ENCODE measurements at regions of chr12 and their contacts with region 1.

Region 1: GRCh38 chr12:15276088-15276698 is 46.1 kb upstream of the PTPRO start:
- DNase-seq: peak; percentile 78
- H3K4me3 Mint-ChIP-seq: peak overlapping the region; percentile 25
- H3K27ac Mint-ChIP-seq: peak overlapping the region; percentile 95
- H3K4me1 Mint-ChIP-seq: peaks cover 55% of the 10 kb centered on the region
- H3K27me3 Mint-ChIP-seq: no peaks in the 10 kb centered on the region
- CTCF ChIP-seq: peak; percentile 61

Region 2: DNA sequence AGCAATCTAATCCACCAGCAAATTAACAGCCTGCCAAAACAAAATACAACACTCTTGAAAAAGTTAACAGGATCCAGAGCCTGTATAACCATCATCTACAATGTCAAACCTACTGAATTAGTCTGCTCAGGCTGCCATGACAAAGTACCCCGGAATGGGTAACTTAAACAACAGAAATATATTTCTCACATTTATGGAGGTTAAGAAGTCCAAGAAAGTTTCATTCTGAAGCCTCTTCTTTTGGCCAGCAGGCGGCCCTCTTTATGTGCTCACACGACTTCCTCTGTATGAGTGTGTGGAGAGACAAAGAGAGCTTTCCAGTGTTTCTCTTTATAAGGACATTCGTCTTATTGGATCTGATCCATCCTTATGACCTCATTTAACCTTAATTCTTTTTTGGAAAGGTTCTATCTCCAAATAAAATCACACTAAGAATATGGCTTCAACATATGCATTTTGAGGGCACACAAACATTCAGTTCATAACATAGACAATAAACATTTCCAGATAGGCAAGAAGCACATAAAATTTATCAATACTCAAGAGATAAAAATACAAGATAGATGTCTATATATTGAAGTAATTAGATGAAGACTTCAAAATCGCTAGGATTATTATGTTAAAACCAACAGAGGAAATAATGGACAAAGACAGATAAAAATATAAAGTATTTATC is 49.1 kb before region 1 on chr12:
- CTCF ChIA-PET with region 1: interaction called, 109 read pairs
- POLR2A ChIA-PET with region 1: interaction called, 3 read pairs
- intact Hi-C with region 1: no loop called
- DNase-seq: peak; percentile 87
- H3K4me3 Mint-ChIP-seq: no peak overlapping the region
- H3K27ac Mint-ChIP-seq: peak overlapping the region; percentile 59
- H3K4me1 Mint-ChIP-seq: peaks cover 49% of the 10 kb centered on the region
- H3K27me3 Mint-ChIP-seq: no peaks in the 10 kb centered on the region
- CTCF ChIP-seq: peak; percentile 59

Region 3: GRCh38 chr12:15446807-15447206 is 170.6 kb after region 1 on chr12:
- CTCF ChIA-PET with region 1: interaction called, 6 read pairs
- POLR2A ChIA-PET with region 1: interaction called, 3 read pairs
- intact Hi-C with region 1: loop called (anchors 1 kb)
- DNase-seq: peak; percentile 96
- H3K4me3 Mint-ChIP-seq: peak overlapping the region; percentile 9
- H3K27ac Mint-ChIP-seq: peak overlapping the region; percentile 25
- H3K4me1 Mint-ChIP-seq: peaks cover 16% of the 10 kb centered on the region
- H3K27me3 Mint-ChIP-seq: no peaks in the 10 kb centered on the region
- CTCF ChIP-seq: no peak

Region 4: DNA sequence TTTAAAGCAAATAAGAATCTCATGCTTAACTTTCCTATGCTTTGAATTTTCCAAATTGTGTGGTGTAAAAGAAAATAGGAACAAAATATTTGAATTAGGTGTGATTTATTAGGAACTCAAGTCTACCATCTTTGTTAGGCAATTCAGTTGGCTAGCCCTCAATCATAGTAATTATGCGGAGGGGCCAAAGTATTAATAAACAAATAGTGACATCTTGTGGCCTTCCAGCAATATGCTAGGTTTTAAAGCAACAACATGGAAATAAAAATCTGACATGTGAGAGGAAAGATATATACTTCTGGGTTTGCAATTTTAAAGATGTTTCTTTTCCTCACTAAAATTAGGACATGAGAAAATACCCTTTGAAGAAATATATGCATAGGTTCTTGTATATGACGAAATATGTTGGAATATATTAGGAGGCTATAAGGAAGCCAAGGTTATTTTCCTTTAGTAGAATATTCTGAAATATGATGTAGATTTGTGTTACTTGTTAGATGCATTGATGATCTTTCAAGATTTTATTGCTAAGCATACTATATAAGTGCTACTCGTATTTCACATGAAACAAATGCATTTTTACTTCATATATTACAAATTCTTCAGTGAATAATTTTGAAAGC is 246.5 kb after region 1 on chr12:
- CTCF ChIA-PET with region 1: interaction called, 65 read pairs
- POLR2A ChIA-PET with region 1: interaction called, 47 read pairs
- intact Hi-C with region 1: loop called (anchors 1 kb)
- DNase-seq: peak; percentile 68
- H3K4me3 Mint-ChIP-seq: no peak overlapping the region
- H3K27ac Mint-ChIP-seq: no peak overlapping the region
- H3K4me1 Mint-ChIP-seq: peaks cover 17% of the 10 kb centered on the region
- H3K27me3 Mint-ChIP-seq: no peaks in the 10 kb centered on the region
- CTCF ChIP-seq: peak; percentile 69

Region 5: DNA sequence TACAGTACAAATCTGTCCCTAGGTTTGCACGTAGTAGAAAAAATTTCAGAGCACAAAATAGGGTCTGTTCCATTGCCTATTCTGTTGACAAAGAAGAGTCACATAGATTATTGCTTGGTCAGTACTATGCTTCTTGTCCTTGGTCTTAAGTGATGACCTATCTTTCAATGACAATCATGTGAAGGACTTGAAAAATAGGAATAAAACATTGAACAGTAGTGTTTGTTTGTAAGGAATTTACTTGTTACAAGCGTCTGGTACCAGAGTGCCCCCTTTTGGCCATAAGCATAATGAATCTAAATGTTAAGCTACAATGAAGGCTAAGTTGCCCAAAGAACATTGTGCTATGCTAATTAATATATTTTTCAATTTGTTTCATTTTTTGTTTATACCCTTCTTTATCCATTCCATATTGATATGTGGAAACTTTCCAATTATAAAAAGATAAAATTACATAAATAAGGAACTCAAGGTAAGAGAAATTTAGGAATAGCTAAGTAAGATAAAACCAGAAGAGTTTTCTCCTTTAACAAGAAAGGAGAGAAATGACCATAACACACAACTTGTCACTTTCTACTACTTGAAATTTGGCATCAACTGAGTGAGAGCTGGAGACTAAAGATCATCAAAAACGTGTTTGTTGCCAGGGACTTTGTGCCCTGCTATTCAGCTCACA is 308.3 kb after region 1 on chr12:
- CTCF ChIA-PET with region 1: interaction called, 41 read pairs
- POLR2A ChIA-PET with region 1: interaction called, 6 read pairs
- intact Hi-C with region 1: loop called (anchors 1 kb)
- DNase-seq: peak; percentile 70
- H3K4me3 Mint-ChIP-seq: no peak overlapping the region
- H3K27ac Mint-ChIP-seq: peak overlapping the region; percentile 12
- H3K4me1 Mint-ChIP-seq: no peaks in the 10 kb centered on the region
- H3K27me3 Mint-ChIP-seq: no peaks in the 10 kb centered on the region
- CTCF ChIP-seq: peak; percentile 62

Measured in MCF 10A (cell line).